K562 (cell line): ENCODE measurements at regions of chr6 and their contacts with region 1.

Region 1: DNA sequence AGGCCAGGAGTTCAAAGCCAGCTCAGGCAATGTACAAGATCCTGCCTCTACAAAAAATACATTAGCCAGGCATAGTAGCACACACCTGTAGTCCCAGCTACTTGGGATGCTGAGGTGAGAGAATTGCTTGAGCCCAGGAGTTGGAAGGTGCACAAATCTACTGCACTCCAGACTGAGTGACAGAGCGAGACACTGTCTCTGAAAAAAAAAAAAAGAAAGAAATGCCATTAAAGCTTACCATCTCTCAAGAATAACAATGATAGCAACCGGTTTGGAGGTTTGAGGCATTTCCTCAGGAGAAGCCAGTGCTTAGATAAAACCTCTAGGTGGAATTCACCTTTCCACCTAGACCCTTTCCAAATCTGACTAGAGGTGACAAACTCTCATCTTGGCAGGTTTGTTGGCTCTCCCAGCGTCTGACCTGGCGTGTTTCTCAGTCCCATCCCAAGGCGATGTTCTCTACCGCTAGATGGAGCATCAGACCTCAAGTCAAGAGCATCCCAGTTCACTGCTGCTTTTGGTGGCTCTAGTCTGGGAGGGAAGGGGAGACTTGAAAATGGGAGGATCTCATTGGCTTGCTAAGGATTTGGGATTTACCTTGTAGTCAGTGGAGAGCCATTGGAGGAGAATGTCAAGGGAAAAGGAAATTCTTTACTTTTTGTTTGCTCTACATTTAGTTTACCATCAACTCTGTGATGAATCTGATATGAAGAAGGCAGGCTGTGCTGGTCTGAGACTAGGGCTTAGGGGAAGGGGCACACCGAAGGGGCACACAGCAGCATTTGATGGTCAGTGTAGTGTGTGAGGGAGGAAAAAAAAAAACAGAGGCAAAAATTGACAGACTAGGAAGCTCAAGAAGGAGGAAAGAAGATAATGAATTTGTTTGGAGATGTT is 67.9 kb downstream of the NCOA7 start:
- DNase-seq: peak; percentile 40 to 85 (median 65)
- ATAC-seq: peak; percentile 98
- H3K4me3 ChIP-seq: no peak overlapping the region
- H3K27ac ChIP-seq: no peak overlapping the region
- H3K4me1 ChIP-seq: no peaks in the 10 kb centered on the region; a peak in 1 of 5 replicates
- H3K27me3 ChIP-seq: no peaks in the 10 kb centered on the region
- CTCF ChIP-seq: peak; percentile 85 to 90 (median 89)
- EP300 ChIP-seq: no peak
- POLR2A ChIP-seq: no peak
- RAD21 ChIP-seq: peak; percentile 72 to 86

Region 2: GRCh38 chr6:125906158-125906998 is 47.7 kb after region 1 on chr6:
- CTCF ChIA-PET with region 1: no interaction called
- POLR2A ChIA-PET with region 1: no interaction called
- in situ Hi-C with region 1: no loop called
- intact Hi-C with region 1: loop called (anchors 1 kb)
- DNase-seq: peak; percentile 70 to 80 (median 76)
- ATAC-seq: peak; percentile 91
- H3K4me3 ChIP-seq: no peak overlapping the region
- H3K27ac ChIP-seq: no peak overlapping the region
- H3K4me1 ChIP-seq: peaks cover 5 to 6% of the 10 kb centered on the region in 2 experiments; a peak in 3 of 5 replicates
- H3K27me3 ChIP-seq: no peaks in the 10 kb centered on the region
- CTCF ChIP-seq: peak; percentile 79 to 92 (median 84)
- EP300 ChIP-seq: no peak
- POLR2A ChIP-seq: no peak
- RAD21 ChIP-seq: peak; percentile 57 to 66

Region 3: DNA sequence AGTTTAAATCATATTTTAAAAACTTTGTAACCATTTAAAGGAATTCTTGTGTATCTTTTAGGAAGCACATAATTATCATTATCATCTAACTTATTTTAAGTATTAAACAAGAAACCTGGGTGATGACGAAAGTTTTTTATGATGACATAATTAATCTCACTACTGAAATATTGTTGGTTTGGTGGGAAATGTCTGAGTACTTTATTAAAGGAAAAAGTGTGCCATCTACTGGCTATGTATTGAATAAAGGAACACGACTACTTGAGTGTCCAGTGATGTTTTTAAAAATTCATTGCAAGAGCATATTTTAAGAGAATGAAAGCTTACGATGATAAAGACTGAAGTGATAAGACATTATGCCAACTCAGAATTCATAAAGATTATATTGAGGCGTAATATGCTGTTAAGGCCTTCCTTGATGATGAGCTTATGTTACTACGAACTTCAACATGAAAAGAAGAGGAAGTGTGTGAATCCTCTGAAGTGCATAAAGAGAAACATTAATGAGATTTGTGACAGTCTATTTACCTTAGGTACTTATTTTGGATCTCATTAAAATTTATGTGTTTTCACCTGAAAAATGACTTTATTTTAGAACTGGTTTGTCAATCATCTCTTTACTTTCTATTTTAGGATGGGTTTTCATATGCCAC is 115.7 kb after region 1 on chr6:
- CTCF ChIA-PET with region 1: interaction called, 32 read pairs
- POLR2A ChIA-PET with region 1: no interaction called
- in situ Hi-C with region 1: no loop called
- intact Hi-C with region 1: loop called (anchors 1 kb)
- DNase-seq: peak in 3 of 4 experiments; percentile 39 to 64 (median 41)
- ATAC-seq: peak; percentile 90
- H3K4me3 ChIP-seq: no peak overlapping the region
- H3K27ac ChIP-seq: no peak overlapping the region
- H3K4me1 ChIP-seq: no peaks in the 10 kb centered on the region
- H3K27me3 ChIP-seq: no peaks in the 10 kb centered on the region
- CTCF ChIP-seq: peak; percentile 45 to 80 (median 50); a peak in 5 of 6 replicates
- EP300 ChIP-seq: peak; percentile 23; the same call in 1 of the 2 replicates
- POLR2A ChIP-seq: no peak
- RAD21 ChIP-seq: peak; percentile 81 to 84